Activated naive CD4-positive, alpha-beta T cell treated with anti-CD3 and anti-CD28 coated beads for 36 hours (primary cell): ENCODE measurements at regions of chr16 and their contacts with region 1.

Region 1: DNA sequence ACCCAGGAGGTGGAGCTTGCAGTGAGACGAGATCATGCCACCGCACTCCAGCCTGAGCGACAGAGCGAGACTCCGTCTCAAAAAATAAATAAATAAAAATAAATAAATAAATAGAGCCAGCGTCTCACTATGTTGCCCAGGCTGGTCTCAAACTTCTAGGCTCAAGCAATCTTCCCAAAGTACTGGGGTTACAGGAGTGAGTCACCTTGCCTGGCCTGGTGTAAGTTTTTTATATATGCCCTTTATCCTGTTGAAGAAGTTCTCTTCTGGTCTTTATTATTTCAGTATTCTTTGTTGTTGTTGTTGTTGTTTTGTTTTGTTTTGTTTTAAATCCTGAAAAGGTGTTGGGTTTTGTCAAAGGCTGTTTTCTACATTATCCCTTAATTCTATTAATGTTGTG is 30.1 kb upstream of the ABCC1 start:
- DNase-seq: no peak
- H3K4me3 Mint-ChIP-seq: no peak overlapping the region
- H3K27ac Mint-ChIP-seq: no peak overlapping the region
- H3K4me1 Mint-ChIP-seq: no peaks in the 10 kb centered on the region
- H3K27me3 Mint-ChIP-seq: no peaks in the 10 kb centered on the region

Region 2: DNA sequence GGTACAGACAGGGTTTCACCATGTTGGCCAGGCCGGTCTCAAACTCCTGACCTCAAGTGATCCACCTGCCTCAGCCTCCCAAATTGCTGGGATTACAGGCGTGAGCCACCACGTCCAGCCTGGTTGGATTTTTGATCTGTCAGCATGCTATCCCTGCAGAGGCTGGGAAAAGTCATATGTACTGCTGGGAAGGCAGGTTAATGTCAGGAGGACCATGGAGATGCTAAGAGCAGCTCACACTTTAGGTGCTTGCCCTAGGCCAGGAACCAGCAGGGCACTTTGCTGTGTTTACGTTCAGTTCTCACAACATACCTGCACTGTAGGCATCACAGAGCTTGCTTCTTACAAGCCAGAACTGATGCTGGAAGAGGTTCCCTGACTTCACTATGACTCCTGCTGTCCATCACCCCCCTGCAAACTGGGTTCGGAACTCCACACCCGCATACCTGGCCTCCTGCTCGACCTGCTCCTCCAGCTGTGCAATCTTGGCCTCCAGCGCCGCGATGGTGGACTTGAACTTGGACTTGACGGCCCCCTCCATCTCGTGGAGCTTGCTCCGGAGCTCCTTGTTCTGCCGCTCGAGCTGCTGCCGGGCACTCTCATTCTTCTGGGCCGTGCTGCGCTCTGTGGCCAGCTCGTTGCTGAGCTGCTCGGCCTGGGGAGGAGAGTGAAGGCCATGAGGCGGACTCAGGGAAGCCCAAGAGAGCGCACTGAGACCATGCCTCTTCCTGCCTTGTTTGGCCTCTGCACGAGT is 202.5 kb before region 1 on chr16:
- CTCF ChIA-PET with region 1: no interaction called
- intact Hi-C with region 1: no loop called
- DNase-seq: no peak
- H3K4me3 Mint-ChIP-seq: no peak overlapping the region
- H3K27ac Mint-ChIP-seq: no peak overlapping the region
- H3K4me1 Mint-ChIP-seq: peaks cover 4% of the 10 kb centered on the region
- H3K27me3 Mint-ChIP-seq: no peaks in the 10 kb centered on the region

Region 3: GRCh38 chr16:15966420-15967222 is 47.3 kb after region 1 on chr16:
- CTCF ChIA-PET with region 1: no interaction called
- intact Hi-C with region 1: loop called (anchors 5 kb)
- DNase-seq: no peak
- H3K4me3 Mint-ChIP-seq: no peak overlapping the region
- H3K27ac Mint-ChIP-seq: peak overlapping the region; percentile 30
- H3K4me1 Mint-ChIP-seq: peaks cover 53% of the 10 kb centered on the region
- H3K27me3 Mint-ChIP-seq: no peaks in the 10 kb centered on the region

Region 4: GRCh38 chr16:15996432-15997109 is 77.2 kb after region 1 on chr16:
- CTCF ChIA-PET with region 1: no interaction called
- intact Hi-C with region 1: no loop called
- DNase-seq: no peak
- H3K4me3 Mint-ChIP-seq: no peak overlapping the region
- H3K27ac Mint-ChIP-seq: no peak overlapping the region
- H3K4me1 Mint-ChIP-seq: peaks cover 40% of the 10 kb centered on the region
- H3K27me3 Mint-ChIP-seq: no peaks in the 10 kb centered on the region